ENCODE measurements at regions of chr3 and their contacts with region 1.

Region 1: GRCh38 chr3:157618075-157618760 is 115.0 kb upstream of the VEPH1 start:
- DNase-seq: peak in 1 of 2 donors; percentile 81
- H3K4me3 ChIP-seq: no peak overlapping the region
- H3K27ac ChIP-seq: no peak overlapping the region
- H3K4me1 ChIP-seq: peaks cover 0 to 8% (median 3%) of the 10 kb centered on the region in 4 donors
- H3K27me3 ChIP-seq: no peaks in the 10 kb centered on the region
- CTCF ChIP-seq: peak in 5 of 7 experiments; percentile 54 to 71 (median 59)
- EP300 ChIP-seq: no peak
- POLR2A ChIP-seq: no peak

Region 2: DNA sequence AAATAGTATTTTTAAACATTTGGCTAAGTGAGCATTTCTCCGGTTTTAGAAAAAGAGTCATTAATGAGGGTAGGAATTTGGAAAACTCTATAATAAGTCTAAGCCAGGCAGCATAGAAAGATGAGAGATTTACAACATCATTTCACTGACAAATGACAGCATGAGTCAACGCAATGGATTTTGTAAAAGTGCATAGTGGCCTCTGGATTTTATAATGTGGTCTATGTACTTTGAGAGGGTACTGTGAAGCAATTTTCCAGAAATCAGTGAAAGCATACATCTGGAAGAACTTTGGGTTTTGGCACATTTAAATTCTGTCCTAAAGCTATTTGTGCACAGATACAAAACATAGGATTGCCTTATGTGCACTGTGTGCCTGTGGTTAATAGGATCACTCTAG is 327.5 kb before region 1 on chr3:
- intact Hi-C with region 1: no loop called
- DNase-seq: peak in 1 of 2 donors; percentile 40
- H3K4me3 ChIP-seq: no peak overlapping the region
- H3K27ac ChIP-seq: no peak overlapping the region
- H3K4me1 ChIP-seq: no peaks in the 10 kb centered on the region
- H3K27me3 ChIP-seq: no peaks in the 10 kb centered on the region
- CTCF ChIP-seq: no peak
- EP300 ChIP-seq: no peak
- POLR2A ChIP-seq: no peak

Region 3: GRCh38 chr3:158434412-158435038 is 816.3 kb after region 1 on chr3:
- intact Hi-C with region 1: loop called (anchors 5 kb)
- DNase-seq: peak; percentile 56 to 86
- H3K4me3 ChIP-seq: no peak overlapping the region
- H3K27ac ChIP-seq: no peak overlapping the region
- H3K4me1 ChIP-seq: no peaks in the 10 kb centered on the region
- H3K27me3 ChIP-seq: no peaks in the 10 kb centered on the region
- CTCF ChIP-seq: peak in 5 of 7 experiments; percentile 49 to 58 (median 57)
- EP300 ChIP-seq: no peak
- POLR2A ChIP-seq: no peak

Measured in stomach (tissue), 19 donors.